Tibial artery (tissue), 4 donors: ENCODE measurements at regions of chr9 and their contacts with region 1.

Region 1: GRCh38 chr9:84404095-84404686 is 63.6 kb upstream of the SLC28A3 start:
- DNase-seq: no peak
- H3K4me3 ChIP-seq: no peak overlapping the region
- H3K27ac ChIP-seq: no peak overlapping the region
- H3K4me1 ChIP-seq: no peaks in the 10 kb centered on the region
- H3K27me3 ChIP-seq: no peaks in the 10 kb centered on the region
- CTCF ChIP-seq: no peak

Region 2: GRCh38 chr9:85600675-85601263 is 1196.6 kb after region 1 on chr9:
- intact Hi-C with region 1: loop called (anchors 10 kb)
- DNase-seq: no peak
- H3K4me3 ChIP-seq: no peak overlapping the region
- H3K27ac ChIP-seq: no peak overlapping the region
- H3K4me1 ChIP-seq: no peaks in the 10 kb centered on the region
- H3K27me3 ChIP-seq: no peaks in the 10 kb centered on the region
- CTCF ChIP-seq: no peak